Activated CD4-positive, alpha-beta T cell treated with anti-CD3 and anti-CD28 coated beads for 36 hours (primary cell): ENCODE measurements at regions of chr2 and their contacts with region 1.

Region 1: DNA sequence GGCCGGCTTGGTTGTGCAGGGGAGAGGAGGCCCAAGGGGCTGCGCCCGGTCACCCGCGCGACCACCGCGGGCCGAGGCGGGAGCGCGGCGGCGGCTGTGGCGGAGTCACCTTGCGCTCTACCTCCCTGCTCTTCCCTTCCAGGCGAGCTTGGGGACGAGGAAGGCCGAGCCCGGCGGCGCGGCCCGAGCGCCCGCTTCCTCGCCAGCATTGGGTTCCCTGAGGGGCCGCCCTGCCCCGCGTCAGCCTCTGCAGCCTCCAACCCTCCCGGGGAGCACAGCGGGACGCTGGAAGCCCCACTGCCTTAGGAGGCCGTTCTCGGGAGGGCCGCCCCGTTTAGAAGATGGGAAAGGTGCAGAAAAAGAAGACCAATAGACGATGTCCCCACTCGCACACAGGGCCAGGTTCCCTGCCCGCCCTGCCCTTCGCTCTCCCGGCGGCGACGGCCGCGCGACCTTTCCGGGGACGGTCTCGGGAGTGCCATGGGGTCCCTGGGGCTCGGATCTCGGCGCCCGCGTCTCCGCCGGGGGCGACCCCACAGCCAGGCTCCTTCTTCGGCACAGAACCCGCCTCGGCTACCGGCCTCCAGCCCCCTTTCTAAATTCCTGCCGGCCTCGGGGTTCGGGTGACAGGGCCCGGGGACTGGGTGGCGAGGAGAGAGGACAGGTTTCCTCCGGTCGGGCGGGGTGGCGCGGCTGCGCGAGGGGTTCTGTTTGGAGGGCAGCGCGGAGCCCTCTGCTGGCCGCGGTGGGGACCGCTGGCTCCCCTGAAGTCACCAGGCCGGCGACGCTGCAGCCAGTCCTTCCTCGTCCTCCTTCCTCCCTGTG is 85.5 kb downstream of the HS6ST1 start:
- DNase-seq: peak; percentile 94
- ATAC-seq: peak; percentile 98
- H3K4me3 Mint-ChIP-seq: peak overlapping the region; percentile 67
- H3K27ac Mint-ChIP-seq: no peak overlapping the region
- H3K4me1 Mint-ChIP-seq: peaks cover 2% of the 10 kb centered on the region
- H3K27me3 Mint-ChIP-seq: peaks cover 3% of the 10 kb centered on the region

Region 2: DNA sequence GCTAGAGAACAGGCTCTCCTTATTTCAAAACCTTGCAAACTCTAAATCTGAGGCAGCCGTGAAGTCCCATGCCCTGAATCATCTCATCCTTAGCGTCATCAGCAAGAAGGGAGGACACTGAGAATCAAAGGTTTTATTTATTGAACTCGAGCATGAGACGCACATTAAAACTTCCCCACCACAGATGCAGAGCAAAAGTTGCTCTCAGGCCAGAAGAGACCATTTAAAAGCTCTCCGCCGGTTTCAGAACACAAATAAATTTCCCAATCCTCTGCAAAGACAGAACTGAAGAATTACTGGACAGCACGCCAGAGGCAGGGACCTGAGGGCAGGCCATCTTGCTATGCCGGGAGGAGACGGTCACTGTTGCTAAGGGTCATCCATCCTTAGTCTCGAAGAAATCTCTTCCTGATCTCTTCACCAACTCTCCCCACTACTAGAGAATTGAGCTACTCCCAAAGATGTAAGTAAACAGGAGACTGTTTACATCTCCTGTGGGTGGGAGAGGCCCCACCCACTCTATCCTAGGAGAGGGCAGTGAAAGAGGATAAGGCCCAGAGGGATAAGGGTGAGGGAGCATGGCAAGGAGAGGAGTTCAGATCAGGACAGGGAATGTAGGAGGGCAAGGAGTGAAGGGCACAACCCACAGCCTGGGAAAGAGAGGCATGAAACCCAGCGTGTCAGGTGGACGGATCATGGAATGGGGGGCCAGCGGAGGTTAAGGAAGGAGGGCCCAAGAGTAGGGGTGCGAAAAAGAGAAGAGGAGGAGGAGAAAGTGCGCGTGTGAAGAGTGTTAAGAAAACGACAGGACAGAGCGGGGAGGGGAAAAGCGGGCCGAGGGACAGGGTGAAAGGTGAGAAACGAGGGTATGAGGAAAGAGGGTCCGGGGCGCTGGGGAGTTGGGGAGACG is 348.5 kb before region 1 on chr2:
- CTCF ChIA-PET with region 1: no interaction called
- POLR2A ChIA-PET with region 1: no interaction called
- intact Hi-C with region 1: loop called in 1 of 2 experiments (anchors 10 kb)
- DNase-seq: no peak
- ATAC-seq: no peak
- H3K4me3 Mint-ChIP-seq: peak overlapping the region; percentile 88
- H3K27ac Mint-ChIP-seq: peak overlapping the region; percentile 85
- H3K4me1 Mint-ChIP-seq: peaks cover 57% of the 10 kb centered on the region
- H3K27me3 Mint-ChIP-seq: no peaks in the 10 kb centered on the region

Region 3: DNA sequence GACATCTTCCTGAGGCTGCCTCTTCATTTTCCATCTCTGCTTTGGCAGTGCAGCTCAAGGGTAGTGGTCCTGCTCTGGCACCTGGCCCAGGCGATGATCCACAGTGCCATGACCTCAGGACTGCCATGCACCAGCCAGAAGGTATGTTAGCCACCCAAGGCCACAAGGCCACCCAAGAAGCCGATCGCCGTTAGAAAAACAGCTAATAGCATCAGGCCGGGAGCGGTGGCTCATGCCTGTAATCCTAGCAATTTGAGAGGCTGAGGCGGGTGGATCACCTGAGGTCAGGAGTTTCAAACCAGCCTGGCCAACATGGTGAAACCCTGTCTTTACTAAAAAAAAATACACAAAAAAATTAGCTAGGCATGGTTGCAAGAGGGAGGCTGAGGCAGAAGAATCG is 170.6 kb before region 1 on chr2:
- CTCF ChIA-PET with region 1: interaction called, 4 read pairs
- POLR2A ChIA-PET with region 1: no interaction called
- intact Hi-C with region 1: loop called (anchors 1 kb)
- DNase-seq: no peak
- ATAC-seq: no peak
- H3K4me3 Mint-ChIP-seq: no peak overlapping the region
- H3K27ac Mint-ChIP-seq: no peak overlapping the region
- H3K4me1 Mint-ChIP-seq: no peaks in the 10 kb centered on the region
- H3K27me3 Mint-ChIP-seq: no peaks in the 10 kb centered on the region

Region 4: GRCh38 chr2:128178650-128179460 is 54.3 kb before region 1 on chr2:
- CTCF ChIA-PET with region 1: interaction called, 5 read pairs
- POLR2A ChIA-PET with region 1: no interaction called
- intact Hi-C with region 1: loop called (anchors 1 kb)
- DNase-seq: peak; percentile 77
- ATAC-seq: peak; percentile 92
- H3K4me3 Mint-ChIP-seq: no peak overlapping the region
- H3K27ac Mint-ChIP-seq: no peak overlapping the region
- H3K4me1 Mint-ChIP-seq: peaks cover 2% of the 10 kb centered on the region
- H3K27me3 Mint-ChIP-seq: no peaks in the 10 kb centered on the region

Region 5: DNA sequence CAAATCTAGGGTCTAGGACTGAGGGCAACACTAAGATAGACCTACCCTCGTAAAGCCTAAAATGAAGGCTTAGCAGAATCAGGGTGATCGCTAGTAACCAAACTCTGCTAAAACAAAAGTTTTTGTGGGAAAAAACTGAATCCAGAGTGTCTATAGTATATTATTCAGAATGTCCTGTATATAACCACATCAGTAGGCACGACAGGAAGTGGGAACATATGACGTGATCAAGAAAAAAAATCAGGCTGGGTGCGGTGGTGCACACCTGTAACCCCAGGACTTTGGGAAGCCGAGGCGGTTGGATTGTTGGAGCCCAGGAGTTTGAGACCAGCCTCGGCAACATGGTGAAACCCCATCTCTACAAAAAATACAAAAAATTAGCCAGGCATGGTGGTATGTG is 36.1 kb before region 1 on chr2:
- CTCF ChIA-PET with region 1: no interaction called
- POLR2A ChIA-PET with region 1: no interaction called
- intact Hi-C with region 1: loop called in 1 of 2 experiments (anchors 1 kb)
- DNase-seq: peak; percentile 16
- ATAC-seq: peak; percentile 27
- H3K4me3 Mint-ChIP-seq: no peak overlapping the region
- H3K27ac Mint-ChIP-seq: peak overlapping the region; percentile 53
- H3K4me1 Mint-ChIP-seq: peaks cover 33% of the 10 kb centered on the region
- H3K27me3 Mint-ChIP-seq: no peaks in the 10 kb centered on the region